ENCODE measurements at regions of chr1 and their contacts with region 1.

Region 1: GRCh38 chr1:150925816-150926741 is at the start of gene SETDB1:
- DNase-seq: peak; percentile 73 to 95 (median 90)
- ATAC-seq: peak; percentile 96 to 98 (median 97)
- H3K4me3 ChIP-seq: peak within 1 kb of the TSS; percentile 79 to 86
- H3K4me3 Mint-ChIP-seq: peak within 1 kb of the TSS; percentile 92 to 94 (median 93)
- H3K27ac ChIP-seq: peak within 1 kb of the TSS; percentile 74
- H3K27ac Mint-ChIP-seq: peak within 1 kb of the TSS; percentile 94 to 95
- H3K4me1 ChIP-seq: peaks cover 9 to 22% of the 10 kb centered on the region in 2 experiments
- H3K4me1 Mint-ChIP-seq: peaks cover 23 to 35% (median 27%) of the 10 kb centered on the region in 3 donors
- H3K27me3 ChIP-seq: no peaks in the 10 kb centered on the region
- H3K27me3 Mint-ChIP-seq: no peaks in the 10 kb centered on the region
- total RNA-seq, gene SETDB1: 44.5 to 72.6 (median 62.5) TPM

Region 2: GRCh38 chr1:150876119-150876454 is 50.0 kb before region 1 on chr1:
- CTCF ChIA-PET with region 1: interaction called, 3 to 8 read pairs
- POLR2A ChIA-PET with region 1: interaction called in 1 of 2 experiments, 12 read pairs
- DNase-seq: peak in 1 of 35 experiments; percentile 49
- ATAC-seq: peak in 3 of 4 experiments; percentile 46 to 54 (median 49)
- H3K4me3 ChIP-seq: peak overlapping the region; percentile 63 to 78
- H3K4me3 Mint-ChIP-seq: peak overlapping the region; percentile 86 to 90 (median 89)
- H3K27ac ChIP-seq: peak overlapping the region; percentile 71
- H3K27ac Mint-ChIP-seq: peak overlapping the region; percentile 65 to 83
- H3K4me1 ChIP-seq: peaks cover 4 to 13% of the 10 kb centered on the region in 2 experiments
- H3K4me1 Mint-ChIP-seq: peaks cover 28 to 39% (median 35%) of the 10 kb centered on the region in 3 donors
- H3K27me3 ChIP-seq: no peaks in the 10 kb centered on the region
- H3K27me3 Mint-ChIP-seq: no peaks in the 10 kb centered on the region

Region 3: GRCh38 chr1:150987924-150988323 is 61.8 kb after region 1 on chr1:
- CTCF ChIA-PET with region 1: no interaction called
- POLR2A ChIA-PET with region 1: interaction called in 1 of 2 experiments, 14 read pairs
- DNase-seq: no peak
- ATAC-seq: peak in 1 of 4 experiments; percentile 5
- H3K4me3 ChIP-seq: no peak overlapping the region
- H3K4me3 Mint-ChIP-seq: no peak overlapping the region
- H3K27ac ChIP-seq: no peak overlapping the region
- H3K27ac Mint-ChIP-seq: no peak overlapping the region
- H3K4me1 ChIP-seq: peaks cover 0 to 7% of the 10 kb centered on the region in 2 experiments
- H3K4me1 Mint-ChIP-seq: peaks cover 5 to 9% (median 5%) of the 10 kb centered on the region in 3 donors
- H3K27me3 ChIP-seq: peaks cover 0 to 3% of the 10 kb centered on the region in 2 experiments
- H3K27me3 Mint-ChIP-seq: no peaks in the 10 kb centered on the region